ENCODE measurements at regions of chr5 and their contacts with region 1.

Region 1: GRCh38 chr5:95646554-95647431 is at the start of gene RFESD:
- DNase-seq: peak; percentile 96
- H3K4me3 Mint-ChIP-seq: peak within 1 kb of the TSS; percentile 74
- H3K27ac Mint-ChIP-seq: peak within 1 kb of the TSS; percentile 89
- H3K4me1 Mint-ChIP-seq: peaks cover 15% of the 10 kb centered on the region
- H3K27me3 Mint-ChIP-seq: no peaks in the 10 kb centered on the region
- CTCF ChIP-seq: no peak
- total RNA-seq, gene RFESD: 4.2 and 5.9 TPM in 2 replicates

Region 2: GRCh38 chr5:95471942-95472341 is 174.9 kb before region 1 on chr5:
- CTCF ChIA-PET with region 1: no interaction called
- POLR2A ChIA-PET with region 1: no interaction called
- intact Hi-C with region 1: no loop called
- DNase-seq: peak; percentile 1
- H3K4me3 Mint-ChIP-seq: no peak overlapping the region
- H3K27ac Mint-ChIP-seq: no peak overlapping the region
- H3K4me1 Mint-ChIP-seq: peaks cover 9% of the 10 kb centered on the region
- H3K27me3 Mint-ChIP-seq: no peaks in the 10 kb centered on the region
- CTCF ChIP-seq: no peak

Region 3: DNA sequence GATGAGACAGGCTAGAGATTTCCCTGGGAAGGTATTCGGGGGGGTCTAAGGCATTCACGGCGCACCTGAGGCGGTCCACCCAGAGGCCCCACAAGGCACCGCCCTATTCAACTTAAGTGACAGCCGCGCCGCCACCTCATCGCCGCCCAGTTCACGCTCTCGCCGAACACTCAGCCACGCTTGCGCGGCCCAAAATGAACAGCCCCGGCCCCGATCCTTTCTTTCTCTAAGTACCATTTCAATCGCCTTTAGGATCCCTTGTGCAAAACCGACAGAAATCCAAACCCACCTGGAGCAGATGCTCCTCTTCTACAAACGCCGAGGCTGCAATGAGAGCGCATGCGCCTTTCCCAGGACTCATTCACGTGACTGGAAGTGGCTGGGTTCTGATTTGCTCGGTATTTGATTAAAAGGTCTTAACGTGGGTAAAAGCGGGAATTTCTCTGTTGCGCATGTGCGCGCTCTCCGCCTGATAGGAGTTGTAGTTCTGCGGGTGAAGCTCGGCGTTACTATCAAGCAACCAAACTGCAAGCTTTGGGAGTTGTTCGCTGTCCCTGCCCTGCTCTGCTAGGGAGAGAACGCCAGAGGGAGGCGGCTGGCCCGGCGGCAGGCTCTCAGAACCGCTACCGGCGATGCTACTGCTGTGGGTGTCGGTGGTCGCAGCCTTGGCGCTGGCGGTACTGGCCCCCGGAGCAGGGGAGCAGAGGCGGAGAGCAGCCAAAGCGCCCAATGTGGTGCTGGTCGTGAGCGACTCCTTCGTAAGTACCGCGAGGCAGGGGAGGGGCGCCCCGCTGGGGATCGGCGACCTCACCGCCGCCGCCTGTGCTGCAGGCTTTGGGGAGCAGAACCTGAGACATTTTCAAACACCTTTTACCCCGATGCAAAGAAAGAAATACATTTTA is 91.9 kb before region 1 on chr5 and contains the starts of genes ARSK and SKIC3:
- CTCF ChIA-PET with region 1: interaction called, 5 read pairs
- POLR2A ChIA-PET with region 1: interaction called, 17 read pairs
- intact Hi-C with region 1: loop called (anchors 1 kb)
- DNase-seq: peak; percentile 99
- H3K4me3 Mint-ChIP-seq: peak within 1 kb of the TSS; percentile 88
- H3K27ac Mint-ChIP-seq: peak within 1 kb of the TSS; percentile 74
- H3K4me1 Mint-ChIP-seq: peaks cover 26% of the 10 kb centered on the region
- H3K27me3 Mint-ChIP-seq: no peaks in the 10 kb centered on the region
- CTCF ChIP-seq: no peak
- total RNA-seq, gene ARSK: 3.6 and 5.4 TPM in 2 replicates
- total RNA-seq, gene SKIC3: 97.2 and 105 TPM in 2 replicates

Region 4: GRCh38 chr5:95730730-95731570 is 84.2 kb after region 1 on chr5 and contains the start of gene RHOBTB3:
- CTCF ChIA-PET with region 1: interaction called, 11 read pairs
- POLR2A ChIA-PET with region 1: interaction called, 17 read pairs
- intact Hi-C with region 1: no loop called
- DNase-seq: peak; percentile 61
- H3K4me3 Mint-ChIP-seq: peak within 1 kb of the TSS; percentile 73
- H3K27ac Mint-ChIP-seq: no peak within 1 kb of the TSS
- H3K4me1 Mint-ChIP-seq: no peaks in the 10 kb centered on the region
- H3K27me3 Mint-ChIP-seq: no peaks in the 10 kb centered on the region
- CTCF ChIP-seq: no peak
- total RNA-seq, gene RHOBTB3: 3.4 and 3.8 TPM in 2 replicates

Region 5: GRCh38 chr5:95822542-95823181 is 175.9 kb after region 1 on chr5 and contains the start of gene GLRX:
- CTCF ChIA-PET with region 1: interaction called, 7 read pairs
- POLR2A ChIA-PET with region 1: interaction called, 29 read pairs
- intact Hi-C with region 1: no loop called
- DNase-seq: peak; percentile 93
- H3K4me3 Mint-ChIP-seq: peak within 1 kb of the TSS; percentile 95
- H3K27ac Mint-ChIP-seq: peak within 1 kb of the TSS; percentile 92
- H3K4me1 Mint-ChIP-seq: peaks cover 42% of the 10 kb centered on the region
- H3K27me3 Mint-ChIP-seq: no peaks in the 10 kb centered on the region
- CTCF ChIP-seq: no peak
- total RNA-seq, gene GLRX: 41.4 and 59.2 TPM in 2 replicates

Region 6: GRCh38 chr5:95989283-95990041 is 342.7 kb after region 1 on chr5:
- CTCF ChIA-PET with region 1: no interaction called
- POLR2A ChIA-PET with region 1: no interaction called
- intact Hi-C with region 1: no loop called
- DNase-seq: no peak
- H3K4me3 Mint-ChIP-seq: no peak overlapping the region
- H3K27ac Mint-ChIP-seq: no peak overlapping the region
- H3K4me1 Mint-ChIP-seq: no peaks in the 10 kb centered on the region
- H3K27me3 Mint-ChIP-seq: no peaks in the 10 kb centered on the region
- CTCF ChIP-seq: no peak

Region 7: DNA sequence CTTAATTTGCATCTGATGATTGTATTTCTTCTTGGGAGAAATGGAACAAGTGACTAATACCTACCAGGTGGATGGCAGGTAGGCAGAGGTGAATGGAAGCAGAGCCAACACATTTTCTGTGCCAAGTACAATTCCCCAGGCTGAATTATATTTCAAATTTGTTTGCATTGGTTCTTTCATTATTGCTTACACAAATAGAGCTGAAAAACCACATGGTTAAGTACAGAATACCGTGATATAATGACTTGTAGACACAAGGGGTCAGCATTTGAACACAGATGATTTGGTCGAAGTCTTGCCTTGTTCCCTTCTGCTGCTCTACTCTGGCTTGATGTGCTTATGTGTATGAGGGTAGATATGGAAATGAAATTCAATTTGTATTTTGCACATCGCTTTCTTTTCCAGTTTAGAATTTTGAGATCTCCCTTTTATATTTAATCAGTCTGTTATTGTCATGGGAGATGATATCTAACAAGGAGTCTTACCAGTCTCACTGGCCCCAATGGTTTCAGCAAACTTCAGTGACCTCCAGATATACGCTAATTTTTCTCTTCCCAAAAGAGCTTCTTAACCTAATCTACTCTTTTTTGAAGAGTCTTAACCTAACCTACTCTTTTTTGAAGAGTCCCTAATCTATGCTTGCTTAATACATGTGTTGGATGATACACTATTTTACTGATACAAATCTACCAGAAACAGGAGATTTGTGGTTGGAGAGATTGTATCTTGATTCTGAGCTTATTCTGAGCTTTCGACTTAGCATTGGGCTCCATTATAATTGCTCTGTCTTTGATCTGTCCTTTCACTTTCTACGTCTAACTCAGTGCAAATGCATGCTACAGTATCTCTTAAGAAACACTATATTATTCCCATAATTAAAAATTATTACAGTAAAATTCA is 698.1 kb after region 1 on chr5:
- CTCF ChIA-PET with region 1: no interaction called
- POLR2A ChIA-PET with region 1: no interaction called
- intact Hi-C with region 1: loop called (anchors 5 kb)
- DNase-seq: peak; percentile 83
- H3K4me3 Mint-ChIP-seq: no peak overlapping the region
- H3K27ac Mint-ChIP-seq: no peak overlapping the region
- H3K4me1 Mint-ChIP-seq: peaks cover 16% of the 10 kb centered on the region
- H3K27me3 Mint-ChIP-seq: no peaks in the 10 kb centered on the region
- CTCF ChIP-seq: peak; percentile 67

Measured in MCF 10A (cell line).